Posterior vena cava (tissue), 2 donors: ENCODE measurements at regions of chr12 and their contacts with region 1.

Region 1: DNA sequence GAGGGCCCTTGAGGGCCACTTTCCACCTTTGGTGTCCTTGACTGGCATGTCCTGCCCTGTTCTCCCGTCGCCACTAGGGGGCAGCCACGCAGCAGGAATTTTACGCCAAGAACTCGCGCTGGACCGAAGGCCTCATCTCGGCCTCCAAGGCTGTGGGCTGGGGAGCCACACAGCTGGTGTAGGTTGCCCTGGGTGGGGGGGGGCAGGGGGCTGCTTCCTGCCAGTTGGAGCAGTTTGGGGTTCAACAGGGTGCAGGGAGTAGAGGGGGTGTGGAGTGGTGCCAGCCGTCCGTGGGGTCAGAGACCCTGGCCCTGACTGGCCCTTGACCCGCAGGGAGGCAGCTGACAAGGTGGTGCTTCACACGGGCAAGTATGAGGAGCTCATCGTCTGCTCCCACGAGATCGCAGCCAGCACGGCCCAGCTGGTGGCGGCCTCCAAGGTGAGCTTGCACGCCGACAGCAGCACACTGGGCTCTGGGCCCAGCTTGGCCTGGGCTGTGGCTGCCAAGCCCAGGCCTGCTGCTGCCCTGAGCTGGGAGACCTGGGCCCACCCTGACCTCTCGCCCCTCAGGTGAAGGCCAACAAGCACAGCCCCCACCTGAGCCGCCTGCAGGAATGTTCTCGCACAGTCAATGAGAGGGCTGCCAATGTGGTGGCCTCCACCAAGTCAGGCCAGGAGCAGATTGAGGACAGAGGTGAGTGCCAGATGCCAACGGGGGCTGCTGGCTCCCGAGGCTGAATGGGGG is 25.3 kb downstream of the HIP1R start:
- DNase-seq: peak; percentile 96

Region 2: DNA sequence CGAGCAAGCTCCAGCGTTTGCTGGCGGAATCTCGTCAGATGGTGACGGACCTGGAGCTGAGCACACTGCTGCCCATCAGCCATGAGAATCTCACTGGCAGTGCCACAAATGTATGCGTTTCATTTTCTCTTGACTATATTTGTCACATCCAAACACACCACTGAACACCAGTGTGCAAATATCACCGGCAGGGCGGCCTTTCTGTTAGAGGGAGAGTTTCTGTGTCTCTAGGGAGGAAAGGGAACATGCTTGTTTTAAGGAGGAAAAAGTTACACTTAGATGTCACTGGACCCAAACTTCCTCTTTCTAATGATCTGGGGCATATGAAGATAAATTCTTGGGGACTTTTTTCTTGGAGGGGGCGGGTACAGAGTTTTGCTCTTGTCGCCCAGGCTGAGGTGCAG is 47.2 kb before region 1 on chr12:
- intact Hi-C with region 1: no loop called
- DNase-seq: no peak

Region 3: GRCh38 chr12:122880668-122881067 is 20.1 kb after region 1 on chr12:
- intact Hi-C with region 1: loop called in 1 of 2 experiments (anchors 2 kb)
- DNase-seq: no peak

Region 4: DNA sequence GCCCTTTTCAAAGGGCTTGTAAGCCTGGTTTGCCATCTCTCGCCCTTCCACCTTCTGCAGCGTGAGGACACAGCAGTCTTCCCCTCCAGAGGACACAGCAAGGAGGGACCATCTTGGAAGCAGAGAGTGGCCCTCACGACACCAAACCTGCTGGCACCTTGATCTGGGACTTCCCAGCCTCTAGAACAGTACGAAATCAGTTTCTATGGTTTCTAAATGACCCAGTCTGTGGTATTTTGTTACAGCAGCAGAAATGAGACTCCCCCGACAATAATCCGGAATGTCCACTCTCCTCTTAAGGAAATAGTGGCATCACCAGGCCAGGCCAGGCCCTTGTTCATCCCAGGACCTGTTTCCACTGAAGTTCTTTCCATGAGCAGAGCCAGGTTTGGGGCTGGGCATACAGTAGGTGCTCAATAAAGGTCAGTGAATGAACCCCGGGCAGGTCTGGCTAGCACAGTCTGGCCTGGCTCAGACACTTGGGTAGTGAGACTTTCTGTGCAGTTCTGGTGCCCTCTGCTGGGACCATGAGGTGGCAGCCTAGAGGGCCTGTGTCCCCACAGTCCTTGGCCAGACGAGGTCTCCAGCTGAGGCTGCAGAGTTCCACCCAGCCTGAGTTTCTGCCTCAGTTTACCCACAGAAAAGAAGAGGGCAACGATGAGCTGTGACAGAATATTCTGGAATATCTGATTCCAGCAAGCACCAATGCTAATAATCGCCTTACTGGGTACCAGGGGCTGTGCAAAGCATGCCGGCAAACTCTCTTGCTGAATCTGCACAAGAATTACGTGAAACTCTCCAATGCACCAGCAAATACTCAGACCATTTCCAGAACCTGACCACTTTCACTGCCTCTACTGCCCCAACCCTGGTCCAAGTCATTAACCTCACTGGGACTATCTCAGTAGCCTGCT is 91.7 kb after region 1 on chr12:
- intact Hi-C with region 1: loop called (anchors 2 to 5 kb)
- DNase-seq: peak; percentile 92

Region 5: DNA sequence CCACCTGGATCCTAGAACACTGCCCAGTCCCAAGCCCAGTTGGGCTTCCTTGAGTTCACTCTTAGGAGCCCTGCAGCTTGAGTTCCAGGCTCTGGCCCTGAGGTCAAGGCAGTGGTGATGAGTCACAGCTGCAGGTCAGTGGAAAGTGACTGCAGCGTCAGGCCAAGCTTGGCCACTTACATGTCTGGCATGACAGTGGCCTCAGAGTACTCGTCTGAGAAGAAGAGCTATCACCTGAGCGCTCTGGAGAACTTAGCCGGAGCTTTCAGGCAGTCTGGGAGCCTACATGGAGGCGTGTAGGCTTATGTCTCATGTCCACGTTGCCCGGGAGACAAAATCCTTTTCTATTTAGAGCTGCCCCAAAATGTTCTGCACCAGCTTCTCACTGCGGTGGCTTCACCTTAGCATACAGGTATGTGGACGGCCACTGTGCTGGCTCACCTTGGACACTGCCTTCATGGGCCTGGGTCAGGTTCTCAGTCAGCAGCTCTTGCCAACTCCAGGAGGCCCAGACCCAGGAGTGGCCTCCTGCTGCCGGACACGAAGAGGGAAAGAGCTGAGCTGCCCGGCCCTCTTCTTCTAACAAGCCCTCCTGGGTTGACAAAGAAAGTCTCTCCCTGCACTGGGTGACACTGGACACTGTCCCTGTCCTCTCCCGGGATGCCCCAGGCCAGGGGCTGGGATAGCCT is 195.7 kb after region 1 on chr12:
- intact Hi-C with region 1: no loop called
- DNase-seq: no peak

Region 6: GRCh38 chr12:124578445-124578844 is 1717.9 kb after region 1 on chr12:
- intact Hi-C with region 1: no loop called
- DNase-seq: no peak